ENCODE measurements at regions of chr12 and their contacts with region 1.

Region 1: GRCh38 chr12:104456417-104456949 is at the start of gene CHST11:
- DNase-seq: peak; percentile 82
- H3K4me3 ChIP-seq: peak within 1 kb of the TSS; percentile 56 to 77 (median 68)
- H3K27ac ChIP-seq: peak within 1 kb of the TSS; percentile 60
- H3K4me1 ChIP-seq: peaks cover 36% of the 10 kb centered on the region
- H3K27me3 ChIP-seq: no peaks in the 10 kb centered on the region
- CTCF ChIP-seq: peak in 1 of 2 donors; percentile 37
- total RNA-seq, gene CHST11: 7.7 to 35.5 TPM

Region 2: DNA sequence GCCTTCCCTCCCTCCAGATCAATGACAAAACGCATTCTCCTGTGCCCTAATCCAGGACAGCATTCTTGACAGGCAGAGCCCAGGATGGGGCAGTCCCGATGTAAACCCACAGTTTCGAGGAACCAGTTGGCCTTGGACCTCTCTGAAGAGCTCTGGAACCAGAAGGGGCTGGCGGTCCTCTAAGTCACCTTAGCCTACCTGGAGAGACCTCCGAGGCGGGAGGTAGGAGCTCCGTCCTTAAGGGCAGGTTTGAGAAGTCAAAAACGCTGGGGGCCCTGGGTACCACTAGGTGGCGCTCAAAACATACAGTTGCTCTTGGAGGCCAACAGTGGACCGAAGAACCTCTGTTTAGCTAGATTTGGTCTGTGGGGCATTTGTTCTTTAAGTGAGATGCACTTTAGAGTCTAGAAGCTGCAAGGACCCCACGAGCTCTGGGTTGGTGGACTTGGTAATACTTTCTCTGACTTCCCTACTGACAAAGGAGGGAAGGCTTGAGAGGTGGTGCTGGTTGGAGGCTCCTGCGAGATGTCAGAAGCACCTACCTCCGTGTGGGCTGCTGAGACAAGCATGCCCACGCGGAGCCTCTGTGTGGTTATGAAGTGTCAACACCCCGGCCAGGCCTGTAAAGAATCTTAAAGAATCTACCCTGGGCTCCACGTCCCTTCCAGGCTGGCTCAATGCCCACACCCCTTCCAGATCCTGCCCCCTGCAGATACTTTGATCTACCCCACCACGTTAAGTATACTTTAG is 74.6 kb before region 1 on chr12:
- CTCF ChIA-PET with region 1: no interaction called
- dilution Hi-C with region 1: no loop called
- in situ Hi-C with region 1: no loop called
- intact Hi-C with region 1: loop called (anchors 2 kb)
- DNase-seq: peak; percentile 62
- H3K4me3 ChIP-seq: no peak overlapping the region
- H3K27ac ChIP-seq: no peak overlapping the region
- H3K4me1 ChIP-seq: no peaks in the 10 kb centered on the region
- H3K27me3 ChIP-seq: no peaks in the 10 kb centered on the region
- CTCF ChIP-seq: peak; percentile 93 to 98

Region 3: GRCh38 chr12:104588068-104588920 is 131.8 kb after region 1 on chr12:
- CTCF ChIA-PET with region 1: no interaction called
- dilution Hi-C with region 1: no loop called
- in situ Hi-C with region 1: no loop called
- intact Hi-C with region 1: loop called (anchors 1 kb)
- DNase-seq: peak; percentile 97
- H3K4me3 ChIP-seq: peak overlapping the region; percentile 13 to 45 (median 32)
- H3K27ac ChIP-seq: peak overlapping the region; percentile 94
- H3K4me1 ChIP-seq: peaks cover 58% of the 10 kb centered on the region
- H3K27me3 ChIP-seq: no peaks in the 10 kb centered on the region
- CTCF ChIP-seq: no peak

Region 4: DNA sequence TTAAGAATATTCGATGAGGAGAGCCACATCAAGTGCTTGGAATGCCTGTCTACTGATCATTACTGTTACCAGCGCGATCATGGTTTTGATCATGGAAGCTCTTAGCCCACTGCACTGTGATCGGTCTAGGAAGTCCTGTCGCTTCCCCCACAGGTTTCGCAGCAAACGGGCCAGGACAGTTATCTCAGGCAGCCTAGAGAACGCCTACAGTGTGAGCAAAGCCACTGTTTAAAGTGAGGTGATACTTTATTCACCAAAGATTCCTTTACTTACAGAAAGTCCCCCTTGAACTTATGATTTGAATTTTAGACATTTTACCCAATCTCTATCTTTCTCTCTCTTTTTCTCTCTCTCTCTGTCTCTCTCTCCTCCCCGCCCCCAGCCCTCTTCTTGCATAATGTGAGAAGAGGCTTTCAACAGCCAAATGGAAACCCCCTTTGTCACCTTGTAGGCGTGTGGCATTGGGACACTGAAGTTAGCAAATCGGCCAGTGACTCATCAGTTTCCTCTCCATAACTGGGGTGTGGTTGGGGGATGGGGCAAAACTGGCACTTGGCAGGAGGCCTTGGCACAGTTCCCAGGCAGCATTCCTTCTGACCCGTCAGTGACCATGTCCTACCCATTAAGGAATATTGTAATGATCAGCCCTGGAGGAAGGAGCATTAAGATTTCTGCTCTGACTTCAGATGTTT is 215.1 kb after region 1 on chr12:
- CTCF ChIA-PET with region 1: no interaction called
- dilution Hi-C with region 1: no loop called
- in situ Hi-C with region 1: no loop called
- intact Hi-C with region 1: loop called (anchors 1 kb)
- DNase-seq: peak; percentile 96
- H3K4me3 ChIP-seq: no peak overlapping the region
- H3K27ac ChIP-seq: peak overlapping the region; percentile 55
- H3K4me1 ChIP-seq: peaks cover 52% of the 10 kb centered on the region
- H3K27me3 ChIP-seq: no peaks in the 10 kb centered on the region
- CTCF ChIP-seq: no peak

Region 5: DNA sequence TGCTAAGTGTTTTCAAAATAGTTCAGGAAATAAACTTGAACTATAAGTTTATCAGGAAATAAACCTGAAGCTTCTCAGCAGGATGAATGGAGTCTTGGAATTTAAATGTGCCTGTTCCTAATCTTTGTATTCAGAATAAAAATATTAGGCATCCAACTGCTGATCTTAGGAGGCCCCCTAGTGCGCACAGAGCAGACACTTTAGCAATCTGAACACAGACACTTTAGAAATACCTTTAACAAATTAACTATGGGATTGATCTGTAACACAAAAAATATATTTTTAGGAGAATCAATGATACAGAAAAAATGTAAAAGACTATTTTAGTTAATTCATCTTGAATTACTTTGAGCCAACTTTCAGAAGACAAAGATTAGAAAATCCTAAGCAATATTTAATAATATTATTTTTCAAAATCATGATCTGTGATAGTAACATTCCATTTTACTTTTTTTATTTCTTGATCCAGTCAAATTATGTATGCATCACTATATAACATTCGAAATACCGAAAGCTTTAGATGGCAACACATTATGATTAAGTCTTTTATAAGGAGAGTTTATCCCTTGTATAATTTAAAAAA is 420.7 kb after region 1 on chr12:
- CTCF ChIA-PET with region 1: no interaction called
- dilution Hi-C with region 1: no loop called
- in situ Hi-C with region 1: no loop called
- intact Hi-C with region 1: loop called (anchors 1 kb)
- DNase-seq: peak; percentile 19
- H3K4me3 ChIP-seq: no peak overlapping the region
- H3K27ac ChIP-seq: no peak overlapping the region
- H3K4me1 ChIP-seq: no peaks in the 10 kb centered on the region
- H3K27me3 ChIP-seq: no peaks in the 10 kb centered on the region
- CTCF ChIP-seq: peak; percentile 56 to 74

Region 6: GRCh38 chr12:105107494-105108371 is 651.2 kb after region 1 on chr12 and contains the start of gene WASHC4:
- CTCF ChIA-PET with region 1: no interaction called
- dilution Hi-C with region 1: no loop called
- in situ Hi-C with region 1: no loop called
- intact Hi-C with region 1: loop called (anchors 10 kb)
- DNase-seq: peak; percentile 94
- H3K4me3 ChIP-seq: peak within 1 kb of the TSS; percentile 80 to 99 (median 96)
- H3K27ac ChIP-seq: peak within 1 kb of the TSS; percentile 79
- H3K4me1 ChIP-seq: peaks cover 15% of the 10 kb centered on the region
- H3K27me3 ChIP-seq: no peaks in the 10 kb centered on the region
- CTCF ChIP-seq: peak in 1 of 2 donors; percentile 2
- total RNA-seq, gene WASHC4: 48.4 to 75.2 TPM

Measured in mammary epithelial cell (primary cell).